Lower leg skin (tissue), 4 donors: ENCODE measurements at regions of chr5 and their contacts with region 1.

Region 1: DNA sequence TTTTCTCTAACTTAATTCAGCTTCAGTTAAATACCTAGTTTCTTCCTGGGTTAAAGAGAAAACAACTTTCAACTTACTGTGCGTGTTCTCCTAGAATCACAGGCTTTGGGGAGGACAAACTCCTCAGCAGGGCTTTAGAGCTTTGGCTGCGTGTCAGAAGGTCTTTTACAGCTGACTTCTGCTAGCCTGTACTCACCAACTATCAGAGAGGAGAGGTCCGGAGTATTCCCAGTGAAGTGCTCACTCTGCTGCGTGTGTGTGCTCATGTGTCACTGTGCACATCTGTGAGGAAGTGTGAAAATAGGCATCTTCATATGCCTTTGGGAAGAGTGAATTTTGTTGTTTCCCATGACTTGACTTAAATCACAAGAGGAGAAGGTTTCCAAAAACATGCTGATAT is 423.2 kb upstream of the SGCD start:
- DNase-seq: no peak
- H3K4me3 ChIP-seq: no peak overlapping the region
- CTCF ChIP-seq: no peak
- POLR2A ChIP-seq: no peak

Region 2: GRCh38 chr5:156147251-156147947 is 243.6 kb after region 1 on chr5:
- intact Hi-C with region 1: loop called (anchors 5 kb)
- DNase-seq: no peak
- H3K4me3 ChIP-seq: no peak overlapping the region
- CTCF ChIP-seq: no peak
- POLR2A ChIP-seq: no peak